Prostate gland (tissue), 2 donors: ENCODE measurements at regions of chr1 and their contacts with region 1.

Region 1: DNA sequence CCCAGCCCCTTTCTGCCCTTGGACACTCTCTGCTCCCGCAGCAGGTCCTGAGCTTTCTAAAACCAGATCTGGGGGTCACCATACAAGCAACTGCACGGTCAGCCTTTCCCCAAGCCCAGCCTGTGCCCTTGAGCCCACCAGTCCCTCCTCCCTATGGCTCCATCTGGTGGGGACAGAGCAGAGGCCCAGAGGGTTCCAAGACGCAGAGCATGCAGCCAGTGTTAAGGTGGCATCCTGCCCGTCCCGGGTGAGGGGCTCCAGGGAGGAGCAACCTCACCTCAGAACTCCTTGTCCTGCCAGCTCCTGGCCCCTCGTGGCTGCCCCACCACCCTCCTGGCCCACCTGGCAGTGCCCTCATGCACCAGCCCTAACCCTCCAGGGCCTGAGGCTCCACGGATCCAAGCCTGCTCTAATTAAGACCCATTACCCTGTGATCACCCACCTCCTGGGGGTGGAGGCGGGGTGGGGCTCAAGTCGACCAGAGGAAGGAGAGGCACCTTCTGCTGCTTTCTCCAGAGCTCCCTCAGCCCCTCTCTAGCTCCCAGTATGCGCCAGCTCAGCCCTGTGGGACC is 8.5 kb downstream of the CHD5 start:
- DNase-seq: no peak
- H3K4me3 ChIP-seq: no peak overlapping the region
- H3K27ac ChIP-seq: no peak overlapping the region
- H3K4me1 ChIP-seq: no peaks in the 10 kb centered on the region
- H3K27me3 ChIP-seq: peaks cover 5% of the 10 kb centered on the region
- CTCF ChIP-seq: peak in 1 of 4 experiments; percentile 14
- POLR2A ChIP-seq: no peak

Region 2: GRCh38 chr1:6052543-6053205 is 119.0 kb before region 1 on chr1:
- intact Hi-C with region 1: loop called (anchors 10 kb)
- DNase-seq: peak; percentile 70
- H3K4me3 ChIP-seq: no peak overlapping the region
- H3K27ac ChIP-seq: no peak overlapping the region
- H3K4me1 ChIP-seq: peaks cover 7% of the 10 kb centered on the region
- H3K27me3 ChIP-seq: no peaks in the 10 kb centered on the region
- CTCF ChIP-seq: peak in 3 of 4 experiments; percentile 44 to 58 (median 46)
- POLR2A ChIP-seq: no peak

Region 3: DNA sequence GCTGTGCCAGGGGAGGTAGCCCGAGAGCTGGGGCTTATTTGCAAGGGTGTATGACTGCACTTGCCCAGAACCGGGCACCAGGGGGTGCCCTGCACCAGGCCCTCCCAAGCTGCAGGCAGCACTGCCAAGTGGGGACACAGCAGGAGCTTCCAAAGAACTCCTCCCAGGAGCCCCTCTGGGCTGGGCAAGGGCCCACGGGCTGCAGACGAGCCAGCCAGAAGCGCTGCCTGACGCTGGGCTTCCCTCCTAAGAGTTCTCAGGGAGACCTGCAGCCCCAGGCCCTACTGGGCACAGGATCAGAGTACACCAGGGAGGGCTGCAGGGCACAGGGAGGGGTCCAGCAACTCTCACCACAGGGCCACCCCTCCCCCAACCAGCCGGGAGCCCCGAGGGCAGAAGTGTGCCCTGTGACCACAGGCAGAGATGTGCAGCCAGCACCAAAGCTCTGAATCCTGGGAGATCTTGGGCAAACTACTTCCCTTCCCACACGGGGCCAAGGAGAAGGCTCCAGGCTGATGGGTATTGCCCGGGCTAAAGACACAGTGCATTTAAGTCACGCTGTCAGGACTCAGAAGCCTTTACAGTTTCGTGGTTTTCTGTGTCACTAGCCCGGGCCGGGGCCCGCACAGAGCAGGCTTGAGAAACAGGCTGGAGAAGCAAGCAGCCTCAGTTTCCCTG is 62.6 kb before region 1 on chr1:
- intact Hi-C with region 1: no loop called
- DNase-seq: peak; percentile 19
- H3K4me3 ChIP-seq: no peak overlapping the region
- H3K27ac ChIP-seq: no peak overlapping the region
- H3K4me1 ChIP-seq: no peaks in the 10 kb centered on the region
- H3K27me3 ChIP-seq: no peaks in the 10 kb centered on the region
- CTCF ChIP-seq: peak in 3 of 4 experiments; percentile 24 to 58 (median 48)
- POLR2A ChIP-seq: no peak

Region 4: GRCh38 chr1:6347641-6348487 is 176.2 kb after region 1 on chr1:
- intact Hi-C with region 1: no loop called
- DNase-seq: peak; percentile 24
- H3K4me3 ChIP-seq: no peak overlapping the region
- H3K27ac ChIP-seq: no peak overlapping the region
- H3K4me1 ChIP-seq: peaks cover 9% of the 10 kb centered on the region
- H3K27me3 ChIP-seq: no peaks in the 10 kb centered on the region
- CTCF ChIP-seq: peak; percentile 12 to 76 (median 48)
- POLR2A ChIP-seq: no peak